Activated B cell treated with CpG ODN at 0.5 μM for 24 hours (primary cell): ENCODE measurements at regions of chr2 and their contacts with region 1.

Region 1: DNA sequence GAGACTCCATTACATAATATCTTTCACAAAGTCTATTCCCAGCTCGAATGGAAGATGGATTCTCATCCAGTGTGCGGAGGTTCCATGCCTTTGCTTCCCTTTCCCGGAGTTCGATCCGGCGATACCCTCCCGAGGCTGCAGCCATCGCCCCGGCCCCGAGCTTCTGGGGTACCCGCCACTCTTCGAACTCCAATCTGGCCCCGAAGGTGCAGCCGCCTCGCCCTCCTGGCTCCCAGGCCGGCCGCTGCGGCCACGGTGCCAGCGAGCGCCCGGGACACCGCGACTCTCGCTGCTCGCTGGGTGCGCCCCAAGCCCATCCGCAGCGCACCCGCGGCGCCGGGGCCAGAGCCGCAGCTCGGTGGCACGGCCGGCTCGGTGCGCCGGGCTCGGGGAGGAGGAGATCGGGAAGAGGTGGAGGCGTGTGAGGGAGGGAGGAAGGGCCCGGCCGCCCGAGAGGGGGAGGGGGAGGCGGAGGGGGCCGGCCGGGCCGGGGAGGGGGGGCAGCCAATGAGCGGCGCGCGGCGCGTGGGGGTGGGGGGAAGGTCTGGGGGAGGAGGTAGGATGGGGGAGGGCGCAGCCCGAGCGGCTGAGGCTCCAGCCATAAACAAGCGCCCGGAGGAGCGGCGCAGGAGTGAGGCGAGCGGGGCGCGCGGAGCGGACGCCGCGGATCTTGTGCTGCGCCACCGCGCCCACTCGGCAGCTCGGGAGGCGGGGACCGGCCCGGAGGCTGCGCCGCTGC is at the start of gene CRIM1:
- DNase-seq: peak; percentile 33
- ATAC-seq: peak; percentile 56
- H3K4me3 Mint-ChIP-seq: peak within 1 kb of the TSS; percentile 70
- H3K27ac Mint-ChIP-seq: no peak within 1 kb of the TSS
- H3K4me1 Mint-ChIP-seq: peaks cover 36% of the 10 kb centered on the region
- H3K27me3 Mint-ChIP-seq: peaks cover 32% of the 10 kb centered on the region
- CTCF ChIP-seq: no peak
- total RNA-seq, gene CRIM1: 0.58 and 0.71 TPM in 2 replicates

Region 2: GRCh38 chr2:36507408-36507812 is 152.1 kb after region 1 on chr2:
- CTCF ChIA-PET with region 1: interaction called, 9 read pairs
- POLR2A ChIA-PET with region 1: no interaction called
- intact Hi-C with region 1: loop called (anchors 1 kb)
- DNase-seq: no peak
- ATAC-seq: no peak
- H3K4me3 Mint-ChIP-seq: no peak overlapping the region
- H3K27ac Mint-ChIP-seq: no peak overlapping the region
- H3K4me1 Mint-ChIP-seq: no peaks in the 10 kb centered on the region
- H3K27me3 Mint-ChIP-seq: no peaks in the 10 kb centered on the region
- CTCF ChIP-seq: no peak

Region 3: GRCh38 chr2:36663851-36664695 is 308.8 kb after region 1 on chr2:
- CTCF ChIA-PET with region 1: interaction called, 15 read pairs
- POLR2A ChIA-PET with region 1: no interaction called
- intact Hi-C with region 1: loop called (anchors 1 kb)
- DNase-seq: no peak
- ATAC-seq: no peak
- H3K4me3 Mint-ChIP-seq: no peak overlapping the region
- H3K27ac Mint-ChIP-seq: no peak overlapping the region
- H3K4me1 Mint-ChIP-seq: no peaks in the 10 kb centered on the region
- H3K27me3 Mint-ChIP-seq: peaks cover 3% of the 10 kb centered on the region
- CTCF ChIP-seq: no peak

Region 4: DNA sequence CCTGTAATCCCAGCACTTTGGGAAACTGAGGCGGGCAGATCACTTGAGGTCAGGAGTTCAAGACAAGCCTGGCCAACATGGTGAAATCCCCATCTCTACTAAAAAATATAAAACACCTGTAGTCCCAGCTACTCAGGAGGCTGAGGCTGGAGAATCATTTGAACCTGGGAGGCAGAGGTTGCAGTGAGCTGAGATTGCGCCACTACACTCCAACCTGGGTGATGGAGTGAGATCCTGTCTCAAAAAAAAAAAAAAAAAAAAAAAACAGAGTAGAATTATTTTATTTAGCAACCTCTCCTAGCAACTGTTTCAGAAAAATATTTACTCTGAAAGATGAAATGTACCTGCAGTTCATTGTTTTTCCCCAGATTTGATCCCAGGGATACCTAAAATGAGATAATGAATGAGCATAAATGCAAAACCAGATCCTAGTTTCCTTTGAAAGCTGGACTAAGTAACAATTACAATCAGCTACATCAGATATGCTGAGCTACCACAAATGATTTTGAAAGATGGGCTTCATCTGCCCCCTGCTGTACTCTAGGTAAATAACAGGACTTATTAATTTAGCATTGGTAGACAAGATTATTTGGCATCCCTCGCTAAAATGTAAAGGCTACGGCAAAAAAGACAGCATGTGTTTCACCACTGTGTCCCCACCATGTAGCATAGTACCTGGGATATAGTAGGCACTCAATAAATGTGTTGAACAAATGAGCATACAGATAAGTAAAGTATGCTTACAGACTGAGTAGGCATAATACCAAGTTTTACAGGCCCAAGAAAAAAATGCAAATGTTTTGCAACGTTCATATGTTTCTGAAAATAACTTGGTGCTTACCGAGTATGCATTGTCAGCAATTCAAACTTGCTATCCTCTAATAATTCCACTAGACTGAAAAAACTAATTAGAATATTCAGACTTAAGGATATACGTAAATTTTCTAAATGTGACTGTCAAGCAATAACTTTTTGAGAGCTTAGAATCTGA is 1919.3 kb after region 1 on chr2:
- CTCF ChIA-PET with region 1: no interaction called
- POLR2A ChIA-PET with region 1: no interaction called
- intact Hi-C with region 1: loop called (anchors 10 kb)
- DNase-seq: no peak
- ATAC-seq: peak; percentile 56
- H3K4me3 Mint-ChIP-seq: no peak overlapping the region
- H3K27ac Mint-ChIP-seq: no peak overlapping the region
- H3K4me1 Mint-ChIP-seq: peaks cover 3% of the 10 kb centered on the region
- H3K27me3 Mint-ChIP-seq: no peaks in the 10 kb centered on the region
- CTCF ChIP-seq: no peak